Heart left ventricle (tissue), 16 donors: ENCODE measurements at regions of chr11 and their contacts with region 1.

Region 1: DNA sequence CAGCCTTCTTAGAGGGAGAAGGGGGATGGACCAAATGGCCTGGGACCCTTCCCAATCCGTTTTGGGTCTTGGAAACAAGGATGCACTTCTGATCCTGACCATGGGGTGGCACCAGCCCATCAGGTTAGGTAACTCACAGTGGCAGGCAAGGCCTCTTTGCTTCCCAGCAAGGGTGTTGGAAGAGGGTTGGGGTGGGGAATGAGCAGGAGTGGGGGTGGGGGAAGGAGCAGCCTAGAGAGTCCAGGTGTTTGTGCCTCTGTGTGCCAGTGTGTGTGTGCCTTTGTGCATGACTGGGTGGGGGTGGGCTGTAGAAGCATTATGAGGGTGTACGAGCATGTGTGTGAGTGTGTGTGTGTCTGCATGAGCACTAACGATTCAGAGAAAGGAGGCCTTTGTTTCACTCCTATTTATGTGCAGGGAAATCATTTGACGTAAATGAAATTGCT is 213.1 kb downstream of the INSC start:
- DNase-seq: peak; percentile 53 to 64 (median 58)
- ATAC-seq: peak; percentile 76 to 89 (median 84)
- H3K4me3 ChIP-seq: no peak overlapping the region
- H3K27ac ChIP-seq: no peak overlapping the region
- H3K4me1 ChIP-seq: no peaks in the 10 kb centered on the region
- H3K27me3 ChIP-seq: no peaks in the 10 kb centered on the region
- CTCF ChIP-seq: peak; percentile 43 to 76 (median 67)
- POLR2A ChIP-seq: no peak

Region 2: DNA sequence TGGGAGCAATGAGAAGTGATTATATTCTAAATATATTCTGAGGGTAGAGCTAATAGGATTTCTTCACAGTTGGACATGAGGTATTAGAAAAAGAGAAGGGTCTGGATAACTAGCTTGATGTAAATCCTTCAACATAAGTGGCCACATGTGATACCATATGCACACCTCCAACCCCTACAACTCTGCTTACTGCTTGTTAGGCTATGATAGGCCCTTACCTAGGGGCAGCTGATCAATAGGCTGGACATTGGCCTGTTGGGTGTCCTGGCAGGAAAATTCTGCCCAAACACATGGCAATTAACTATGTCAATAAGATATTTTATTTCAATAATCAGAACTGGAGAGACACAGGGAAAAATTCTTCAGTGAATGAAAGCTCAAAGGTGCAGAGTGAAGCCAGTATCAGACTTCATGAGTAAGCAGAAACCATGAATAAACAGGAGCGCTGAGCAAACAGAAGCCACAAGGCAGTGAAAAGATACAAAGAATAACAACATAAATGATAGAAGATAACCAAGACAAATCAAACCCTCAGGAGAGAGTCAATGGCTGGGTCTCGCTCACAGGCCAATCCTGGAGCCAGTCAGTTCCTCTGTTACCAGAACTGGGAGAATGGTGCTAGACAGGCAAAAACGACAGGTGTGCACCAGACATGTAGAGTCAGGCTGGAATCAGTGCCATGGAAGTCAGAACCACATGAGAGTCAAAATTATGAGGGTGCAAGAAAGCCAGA is 761.3 kb before region 1 on chr11:
- intact Hi-C with region 1: no loop called
- DNase-seq: no peak
- ATAC-seq: no peak
- H3K4me3 ChIP-seq: no peak overlapping the region
- H3K27ac ChIP-seq: no peak overlapping the region
- H3K4me1 ChIP-seq: no peaks in the 10 kb centered on the region
- H3K27me3 ChIP-seq: no peaks in the 10 kb centered on the region
- CTCF ChIP-seq: no peak
- POLR2A ChIP-seq: no peak

Region 3: GRCh38 chr11:15969281-15969680 is 641.5 kb after region 1 on chr11:
- intact Hi-C with region 1: loop called in 1 of 10 experiments (anchors 10 kb)
- DNase-seq: peak in 4 of 5 donors; percentile 64 to 79 (median 74)
- ATAC-seq: peak; percentile 85 to 92 (median 90)
- H3K4me3 ChIP-seq: peak overlapping the region in 7 of 12 donors; percentile 2 to 35 (median 16)
- H3K27ac ChIP-seq: peak overlapping the region; percentile 78 to 92 (median 86)
- H3K4me1 ChIP-seq: peaks cover 5 to 60% (median 35%) of the 10 kb centered on the region in 12 donors
- H3K27me3 ChIP-seq: no peaks in the 10 kb centered on the region
- CTCF ChIP-seq: no peak
- POLR2A ChIP-seq: peak in 1 of 2 donors; percentile 41